ENCODE measurements at regions of chr3 and their contacts with region 1.

Region 1: DNA sequence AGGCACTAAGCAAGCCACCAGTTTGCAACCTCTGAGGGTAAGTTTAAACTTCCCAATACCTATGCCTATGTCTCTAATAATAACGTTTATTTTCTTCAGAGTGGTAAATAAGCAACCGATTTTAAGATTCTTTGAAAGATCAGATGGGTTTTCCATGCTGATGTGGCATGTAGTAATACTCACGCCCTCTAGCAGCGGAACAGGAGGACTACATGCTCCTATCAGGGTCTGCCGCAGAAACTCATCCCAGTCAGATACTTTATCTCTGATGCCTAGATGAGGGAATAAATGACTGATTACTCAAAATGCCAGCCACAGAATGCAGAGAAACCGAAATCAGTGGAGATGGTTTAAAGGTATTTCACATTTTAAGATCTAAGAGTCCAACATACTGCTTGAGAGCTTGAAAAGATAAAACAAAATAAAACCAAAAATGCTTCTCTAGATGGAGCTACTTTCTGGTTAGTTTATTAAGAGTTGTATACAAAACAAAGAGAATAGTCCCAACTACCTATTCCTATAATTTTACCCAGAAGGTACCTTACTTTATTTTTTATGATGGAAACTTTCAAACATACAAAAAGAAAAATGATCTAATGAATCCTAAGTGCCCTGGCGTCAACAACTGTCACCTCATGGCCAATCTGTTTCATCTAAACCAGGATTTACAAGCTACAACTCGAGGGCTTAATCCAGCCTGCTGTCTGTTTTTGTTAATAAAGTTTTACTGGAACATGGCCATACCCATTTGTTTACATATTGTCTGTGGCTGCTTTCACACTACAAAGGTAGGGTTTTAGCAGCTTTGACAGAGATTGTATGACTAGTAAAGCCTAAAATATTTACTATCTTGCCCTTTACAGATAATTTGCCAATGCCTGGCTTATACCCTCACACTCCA is 37.5 kb upstream of the STIMATE start:
- DNase-seq: peak; percentile 34 to 57 (median 56)
- H3K4me3 ChIP-seq: no peak overlapping the region
- H3K4me3 Mint-ChIP-seq: no peak overlapping the region
- H3K27ac ChIP-seq: no peak overlapping the region
- H3K27ac Mint-ChIP-seq: no peak overlapping the region
- H3K4me1 ChIP-seq: peaks cover 0 to 6% of the 10 kb centered on the region in 2 donors
- H3K4me1 Mint-ChIP-seq: peaks cover 12% of the 10 kb centered on the region
- H3K27me3 ChIP-seq: no peaks in the 10 kb centered on the region
- H3K27me3 Mint-ChIP-seq: peaks cover 0 to 1% (median 0%) of the 10 kb centered on the region in 3 donors
- CTCF ChIP-seq: peak; percentile 84

Region 2: GRCh38 chr3:52798978-52799476 is 135.9 kb before region 1 on chr3:
- intact Hi-C with region 1: no loop called
- DNase-seq: peak; percentile 15 to 37 (median 36)
- H3K4me3 ChIP-seq: no peak overlapping the region
- H3K4me3 Mint-ChIP-seq: no peak overlapping the region
- H3K27ac ChIP-seq: no peak overlapping the region
- H3K27ac Mint-ChIP-seq: peak overlapping the region in 1 of 7 donors; percentile 30
- H3K4me1 ChIP-seq: no peaks in the 10 kb centered on the region
- H3K4me1 Mint-ChIP-seq: peaks cover 3% of the 10 kb centered on the region
- H3K27me3 ChIP-seq: no peaks in the 10 kb centered on the region
- H3K27me3 Mint-ChIP-seq: peaks cover under 1 to 4% (median 4%) of the 10 kb centered on the region in 3 donors
- CTCF ChIP-seq: peak; percentile 91

Region 3: DNA sequence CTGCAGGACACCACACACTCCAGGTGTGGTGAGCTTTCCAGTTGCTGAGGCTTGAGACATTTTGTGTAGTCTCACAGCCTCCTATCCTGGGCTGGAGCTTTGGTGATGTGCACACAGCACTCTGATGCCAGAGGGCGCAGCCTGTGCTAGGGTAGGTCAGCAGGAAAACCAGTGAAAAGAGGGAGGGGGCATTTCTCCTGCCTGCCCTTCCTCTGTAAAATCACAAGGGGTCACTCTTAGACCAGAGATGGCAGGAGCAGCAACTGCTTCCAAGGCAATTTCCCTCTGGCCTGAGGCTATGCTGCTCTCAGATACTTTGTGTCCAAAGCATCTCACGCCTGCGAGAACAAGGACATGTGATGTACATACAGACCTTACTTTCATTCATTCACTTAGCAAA is 83.5 kb before region 1 on chr3:
- intact Hi-C with region 1: loop called (anchors 5 kb)
- DNase-seq: peak; percentile 29 to 36 (median 29)
- H3K4me3 ChIP-seq: no peak overlapping the region
- H3K4me3 Mint-ChIP-seq: no peak overlapping the region
- H3K27ac ChIP-seq: no peak overlapping the region
- H3K27ac Mint-ChIP-seq: no peak overlapping the region
- H3K4me1 ChIP-seq: no peaks in the 10 kb centered on the region
- H3K4me1 Mint-ChIP-seq: peaks cover 4% of the 10 kb centered on the region
- H3K27me3 ChIP-seq: no peaks in the 10 kb centered on the region
- H3K27me3 Mint-ChIP-seq: peaks cover 0 to 2% (median 0%) of the 10 kb centered on the region in 3 donors
- CTCF ChIP-seq: peak; percentile 68

Region 4: GRCh38 chr3:52859686-52860423 is 75.0 kb before region 1 on chr3:
- intact Hi-C with region 1: loop called in 1 of 2 experiments (anchors 5 kb)
- DNase-seq: no peak
- H3K4me3 ChIP-seq: no peak overlapping the region
- H3K4me3 Mint-ChIP-seq: no peak overlapping the region
- H3K27ac ChIP-seq: no peak overlapping the region
- H3K27ac Mint-ChIP-seq: peak overlapping the region in 3 of 7 donors; percentile 10 to 15 (median 12)
- H3K4me1 ChIP-seq: no peaks in the 10 kb centered on the region
- H3K4me1 Mint-ChIP-seq: no peaks in the 10 kb centered on the region
- H3K27me3 ChIP-seq: no peaks in the 10 kb centered on the region
- H3K27me3 Mint-ChIP-seq: peaks cover 0 to 3% (median 0%) of the 10 kb centered on the region in 3 donors
- CTCF ChIP-seq: no peak

Region 5: GRCh38 chr3:52892625-52893311 is 42.1 kb before region 1 on chr3:
- intact Hi-C with region 1: no loop called
- DNase-seq: peak; percentile 29 to 80 (median 60)
- H3K4me3 ChIP-seq: peak overlapping the region in 1 of 3 experiments; percentile 52
- H3K4me3 Mint-ChIP-seq: peak overlapping the region in 1 of 2 donors; percentile 64
- H3K27ac ChIP-seq: peak overlapping the region; percentile 91
- H3K27ac Mint-ChIP-seq: peak overlapping the region; percentile 82 to 97 (median 95)
- H3K4me1 ChIP-seq: peaks cover 66 to 76% of the 10 kb centered on the region in 2 donors
- H3K4me1 Mint-ChIP-seq: peaks cover 69% of the 10 kb centered on the region
- H3K27me3 ChIP-seq: no peaks in the 10 kb centered on the region
- H3K27me3 Mint-ChIP-seq: peaks cover 0 to 2% (median 0%) of the 10 kb centered on the region in 3 donors
- CTCF ChIP-seq: peak; percentile 2

Measured in CD14-positive monocyte (primary cell).